Activated naive CD8-positive, alpha-beta T cell treated with anti-CD3 and anti-CD28 coated beads, Interleukin-2, amount 10 ng/mL, durations not matched to agents 7 days and 5 days (primary cell): ENCODE measurements at regions of chr4 and their contacts with region 1.

Region 1: GRCh38 chr4:169659716-169660670 is 39.6 kb downstream of the CLCN3 start:
- DNase-seq: no peak
- ATAC-seq: peak; percentile 99
- H3K4me3 Mint-ChIP-seq: peak overlapping the region; percentile 87
- H3K27ac Mint-ChIP-seq: peak overlapping the region; percentile 89
- H3K4me1 Mint-ChIP-seq: peaks cover 17% of the 10 kb centered on the region
- H3K27me3 Mint-ChIP-seq: no peaks in the 10 kb centered on the region

Region 2: DNA sequence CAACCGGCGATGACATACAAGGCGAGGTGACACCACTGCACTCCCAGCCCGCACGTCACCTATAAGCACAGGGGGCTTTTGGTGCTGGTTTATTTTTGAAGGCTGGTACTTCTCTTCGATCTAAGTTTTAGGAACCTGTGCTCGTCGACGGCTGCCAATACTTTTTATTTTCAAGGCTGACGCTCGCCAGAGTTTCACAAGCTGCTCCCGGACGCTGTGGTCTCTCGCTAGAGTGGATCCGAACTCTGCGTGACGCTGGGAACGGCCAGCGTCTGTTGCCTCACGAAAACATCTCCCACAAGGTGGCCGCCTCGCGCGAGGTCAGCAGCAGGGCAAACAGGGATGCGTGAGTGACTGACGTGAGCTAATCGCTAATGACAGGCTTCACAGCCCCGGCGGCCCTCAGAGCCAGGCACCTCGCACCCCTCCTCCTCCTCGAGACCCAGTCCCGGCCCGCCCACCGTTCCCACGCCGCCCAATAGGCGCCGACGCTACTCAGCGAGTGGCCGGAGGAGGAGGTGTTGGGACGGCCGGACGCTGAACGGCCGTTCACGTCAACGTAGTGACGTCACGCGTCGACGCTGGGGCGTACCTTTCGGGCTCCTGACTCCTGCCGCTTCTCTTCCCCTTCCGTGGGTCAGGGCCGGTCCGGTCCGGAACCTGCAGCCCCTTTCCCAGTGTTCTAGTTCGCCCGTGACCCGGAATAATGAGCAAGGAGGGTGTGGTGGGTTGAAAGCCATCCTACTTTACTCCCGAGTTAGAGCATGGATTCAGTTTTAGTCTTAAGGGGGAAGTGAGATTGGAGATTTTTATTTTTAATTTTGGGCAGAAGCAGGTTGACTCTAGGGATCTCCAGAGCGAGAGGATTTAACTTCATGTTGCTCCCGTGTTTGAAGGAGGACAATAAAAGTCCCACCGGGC is 39.8 kb before region 1 on chr4 and contains the start of gene CLCN3:
- POLR2A ChIA-PET with region 1: interaction called, 14 read pairs
- DNase-seq: peak; percentile 89
- ATAC-seq: peak; percentile 91
- H3K4me3 Mint-ChIP-seq: peak within 1 kb of the TSS; percentile 100
- H3K27ac Mint-ChIP-seq: peak within 1 kb of the TSS; percentile 99
- H3K4me1 Mint-ChIP-seq: peaks cover 49% of the 10 kb centered on the region
- H3K27me3 Mint-ChIP-seq: no peaks in the 10 kb centered on the region
- total RNA-seq, gene CLCN3: 26.3 to 28.5 TPM